Right ventricle myocardium inferior (tissue), 1 donor: ENCODE measurements at regions of chr6 and their contacts with region 1.

Region 1: GRCh38 chr6:163218361-163218894 is 196.1 kb upstream of the QKI start:
- DNase-seq: no peak
- ATAC-seq: peak; percentile 49

Region 2: GRCh38 chr6:163284151-163284550 is 65.7 kb after region 1 on chr6:
- intact Hi-C with region 1: loop called (anchors 5 kb)
- DNase-seq: no peak
- ATAC-seq: no peak